Left ventricle myocardium superior (tissue), 1 donor: ENCODE measurements at regions of chr7 and their contacts with region 1.

Region 1: GRCh38 chr7:107678110-107678753 is 17.6 kb downstream of the SLC26A4 start:
- DNase-seq: no peak
- ATAC-seq: no peak

Region 2: GRCh38 chr7:107318523-107319160 is 359.6 kb before region 1 on chr7:
- intact Hi-C with region 1: no loop called
- DNase-seq: no peak
- ATAC-seq: no peak

Region 3: GRCh38 chr7:107644309-107644974 is 33.8 kb before region 1 on chr7:
- intact Hi-C with region 1: loop called (anchors 1 kb)
- DNase-seq: no peak
- ATAC-seq: peak; percentile 41